Activated naive CD4-positive, alpha-beta T cell treated with anti-CD3 and anti-CD28 coated beads for 36 hours (primary cell): ENCODE measurements at regions of chr7 and their contacts with region 1.

Region 1: DNA sequence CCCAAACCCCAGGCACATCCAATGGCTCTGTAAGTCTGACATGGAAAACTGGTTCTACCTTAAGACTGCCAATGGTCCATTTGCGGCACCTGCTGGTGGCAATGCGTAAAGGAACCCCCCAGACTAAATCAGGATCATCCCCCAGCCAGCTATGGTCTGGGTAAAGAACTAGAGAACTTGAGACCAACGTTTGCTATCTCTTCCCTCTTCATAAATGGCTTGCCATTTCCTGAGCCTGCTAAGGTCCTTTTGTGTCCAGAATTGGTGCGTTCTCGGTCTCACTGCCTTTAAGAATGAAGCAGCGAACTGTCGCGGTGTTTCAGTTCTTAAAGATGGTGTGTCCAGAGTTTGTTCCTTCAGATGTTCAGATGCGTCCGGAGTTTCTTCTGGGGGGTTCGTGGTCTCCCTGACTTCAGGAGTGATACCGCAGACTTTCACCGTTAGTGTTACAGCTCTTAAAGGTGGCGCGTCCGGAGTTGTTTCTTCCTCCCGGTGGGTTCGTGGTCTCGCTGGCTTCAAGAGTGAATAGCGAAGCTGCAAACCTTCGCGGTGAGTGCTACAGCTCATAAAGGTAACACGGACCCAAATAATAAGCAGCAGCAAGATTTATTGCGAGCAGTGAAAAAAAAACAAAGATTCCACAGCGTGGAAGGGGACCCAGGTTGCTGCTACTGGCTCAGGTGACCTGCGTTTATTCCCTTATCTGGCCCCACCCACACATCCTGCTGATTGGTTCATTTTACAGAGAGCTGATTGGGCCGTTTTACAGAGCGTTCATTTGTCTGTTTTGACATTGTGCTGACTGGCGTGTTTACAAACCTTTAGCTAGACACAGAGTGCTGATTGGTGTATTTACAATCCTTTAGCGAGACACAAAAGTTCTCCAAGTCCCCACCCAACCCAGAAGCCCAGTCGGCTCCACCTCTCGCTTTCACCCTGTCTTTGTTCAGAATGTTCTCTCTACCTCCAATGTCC is 95.4 kb downstream of the ELMO1 start:
- DNase-seq: peak; percentile 90
- H3K4me3 Mint-ChIP-seq: peak overlapping the region; percentile 96
- H3K27ac Mint-ChIP-seq: peak overlapping the region; percentile 97
- H3K4me1 Mint-ChIP-seq: peaks cover 88% of the 10 kb centered on the region
- H3K27me3 Mint-ChIP-seq: no peaks in the 10 kb centered on the region

Region 2: DNA sequence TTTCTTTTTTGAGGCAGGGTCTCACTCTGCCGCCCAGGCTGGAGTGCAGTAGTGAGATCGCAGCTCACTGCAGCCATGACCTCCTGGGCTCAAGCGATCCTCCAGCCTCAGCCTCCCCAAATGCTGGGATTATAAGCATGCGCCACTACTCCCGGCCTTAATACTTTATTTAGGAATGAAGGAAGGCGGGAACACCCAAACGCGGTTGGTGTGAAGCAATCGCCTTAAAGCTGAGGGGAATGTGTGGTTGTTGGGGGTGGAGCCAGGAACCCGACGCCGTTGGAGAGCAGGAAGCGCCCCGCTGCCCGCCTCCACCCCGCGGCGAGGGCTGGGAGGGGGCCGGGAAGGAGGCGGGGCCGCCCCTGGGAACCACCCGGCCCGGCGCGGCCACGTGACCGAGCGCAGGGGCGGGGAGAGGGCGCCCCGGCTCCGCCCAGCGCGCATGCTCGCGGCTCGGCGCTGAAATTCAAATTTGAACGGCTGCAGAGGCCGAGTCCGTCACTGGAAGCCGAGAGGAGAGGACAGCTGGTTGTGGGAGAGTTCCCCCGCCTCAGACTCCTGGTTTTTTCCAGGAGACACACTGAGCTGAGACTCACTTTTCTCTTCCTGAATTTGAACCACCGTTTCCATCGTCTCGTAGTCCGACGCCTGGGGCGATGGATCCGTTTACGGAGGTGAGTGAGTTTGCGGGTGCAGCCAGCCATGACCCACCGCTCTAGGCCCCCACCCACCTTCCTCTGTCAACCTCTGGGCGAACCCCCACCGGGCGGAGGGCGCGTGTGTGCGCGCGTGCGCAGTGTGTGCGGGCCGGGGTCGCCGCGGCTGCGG is 963.7 kb before region 1 on chr7 and contains the start of gene ANLN:
- CTCF ChIA-PET with region 1: no interaction called
- intact Hi-C with region 1: loop called (anchors 5 kb)
- DNase-seq: peak; percentile 85
- H3K4me3 Mint-ChIP-seq: peak within 1 kb of the TSS; percentile 87
- H3K27ac Mint-ChIP-seq: peak within 1 kb of the TSS; percentile 86
- H3K4me1 Mint-ChIP-seq: peaks cover 21% of the 10 kb centered on the region
- H3K27me3 Mint-ChIP-seq: peaks cover 10% of the 10 kb centered on the region
- total RNA-seq, gene ANLN: 62.4 to 64.8 TPM

Region 3: DNA sequence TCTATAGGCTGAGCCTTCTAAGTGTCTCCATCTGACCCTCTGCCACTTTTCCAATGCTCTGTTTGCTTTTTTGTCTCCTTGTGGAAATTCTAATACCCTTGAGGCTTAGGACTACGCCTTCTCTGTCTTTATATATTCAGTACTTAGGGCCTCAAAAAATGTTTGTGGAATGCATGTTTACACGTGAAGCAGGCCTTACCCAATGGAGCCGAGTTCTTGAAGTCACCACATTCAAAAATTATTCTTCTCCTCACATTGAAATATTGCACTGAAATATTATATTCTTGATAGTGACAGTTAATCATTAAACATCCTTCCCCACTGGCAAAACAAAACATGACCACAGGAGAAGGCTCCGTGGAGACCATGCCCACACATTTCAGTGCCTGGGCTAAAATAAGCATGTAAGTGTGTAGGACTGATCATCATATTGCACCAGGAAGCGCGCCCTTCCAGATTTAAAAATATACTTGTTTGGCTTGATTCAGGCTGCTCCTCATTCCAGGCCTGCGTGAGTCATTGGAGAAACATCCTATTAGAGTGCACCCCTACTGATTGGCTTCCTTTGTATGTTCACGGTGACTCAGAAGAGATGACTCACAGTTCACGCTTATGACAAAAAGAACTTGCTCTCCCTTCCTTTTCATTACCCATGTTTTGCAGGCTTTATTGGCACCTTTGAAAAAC is 321.5 kb before region 1 on chr7:
- CTCF ChIA-PET with region 1: no interaction called
- intact Hi-C with region 1: loop called (anchors 5 kb)
- DNase-seq: peak; percentile 79
- H3K4me3 Mint-ChIP-seq: no peak overlapping the region
- H3K27ac Mint-ChIP-seq: peak overlapping the region; percentile 50
- H3K4me1 Mint-ChIP-seq: peaks cover 60% of the 10 kb centered on the region
- H3K27me3 Mint-ChIP-seq: no peaks in the 10 kb centered on the region

Region 4: GRCh38 chr7:37342688-37343471 is 10.4 kb before region 1 on chr7:
- CTCF ChIA-PET with region 1: interaction called, 28 read pairs
- intact Hi-C with region 1: loop called (anchors 1 kb)
- DNase-seq: peak; percentile 86
- H3K4me3 Mint-ChIP-seq: peak overlapping the region; percentile 89
- H3K27ac Mint-ChIP-seq: peak overlapping the region; percentile 97
- H3K4me1 Mint-ChIP-seq: peaks cover 81% of the 10 kb centered on the region
- H3K27me3 Mint-ChIP-seq: no peaks in the 10 kb centered on the region

Region 5: GRCh38 chr7:37408291-37409228 is 55.3 kb after region 1 on chr7:
- CTCF ChIA-PET with region 1: interaction called, 9 read pairs
- intact Hi-C with region 1: loop called (anchors 1 kb)
- DNase-seq: peak; percentile 44
- H3K4me3 Mint-ChIP-seq: peak overlapping the region; percentile 77
- H3K27ac Mint-ChIP-seq: peak overlapping the region; percentile 98
- H3K4me1 Mint-ChIP-seq: peaks cover 87% of the 10 kb centered on the region
- H3K27me3 Mint-ChIP-seq: no peaks in the 10 kb centered on the region

Region 6: DNA sequence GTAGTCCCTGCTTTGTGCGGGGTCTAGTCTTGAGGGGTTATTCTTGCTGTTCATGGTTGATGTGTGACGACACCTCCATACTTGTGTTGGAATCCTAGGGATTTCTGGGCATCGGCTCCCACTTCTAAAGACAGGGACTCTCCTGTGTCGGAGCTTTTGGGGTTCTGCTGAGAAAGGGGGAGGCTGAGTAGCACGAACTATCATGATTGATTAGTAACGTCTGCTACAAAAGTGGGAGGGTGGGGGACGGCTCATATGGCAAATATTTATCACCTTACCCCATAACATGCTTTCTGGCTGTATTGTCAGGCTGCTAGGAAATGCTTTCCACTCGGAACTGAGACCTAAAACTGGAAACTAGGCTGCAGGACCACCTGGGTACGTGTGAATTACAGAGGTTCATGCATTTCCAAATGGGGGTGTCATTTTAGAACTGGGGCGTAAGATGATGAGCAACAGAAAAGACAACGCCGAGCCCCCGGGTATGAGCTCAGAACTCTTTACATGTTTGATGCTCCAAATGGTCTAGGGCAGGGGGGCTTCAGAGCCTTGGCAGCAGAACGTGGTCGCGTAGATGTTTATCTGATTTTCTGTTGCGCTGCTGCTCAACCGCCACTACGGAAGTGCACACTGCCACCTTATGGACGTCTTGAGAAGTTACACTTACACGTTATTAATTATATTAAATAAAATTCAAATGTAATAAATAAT is 480.0 kb after region 1 on chr7:
- CTCF ChIA-PET with region 1: no interaction called
- intact Hi-C with region 1: loop called (anchors 10 kb)
- DNase-seq: peak; percentile 57
- H3K4me3 Mint-ChIP-seq: peak overlapping the region; percentile 73
- H3K27ac Mint-ChIP-seq: no peak overlapping the region
- H3K4me1 Mint-ChIP-seq: peaks cover 5% of the 10 kb centered on the region
- H3K27me3 Mint-ChIP-seq: peaks cover 4% of the 10 kb centered on the region